ENCODE measurements at regions of chr11 and their contacts with region 1.

Region 1: DNA sequence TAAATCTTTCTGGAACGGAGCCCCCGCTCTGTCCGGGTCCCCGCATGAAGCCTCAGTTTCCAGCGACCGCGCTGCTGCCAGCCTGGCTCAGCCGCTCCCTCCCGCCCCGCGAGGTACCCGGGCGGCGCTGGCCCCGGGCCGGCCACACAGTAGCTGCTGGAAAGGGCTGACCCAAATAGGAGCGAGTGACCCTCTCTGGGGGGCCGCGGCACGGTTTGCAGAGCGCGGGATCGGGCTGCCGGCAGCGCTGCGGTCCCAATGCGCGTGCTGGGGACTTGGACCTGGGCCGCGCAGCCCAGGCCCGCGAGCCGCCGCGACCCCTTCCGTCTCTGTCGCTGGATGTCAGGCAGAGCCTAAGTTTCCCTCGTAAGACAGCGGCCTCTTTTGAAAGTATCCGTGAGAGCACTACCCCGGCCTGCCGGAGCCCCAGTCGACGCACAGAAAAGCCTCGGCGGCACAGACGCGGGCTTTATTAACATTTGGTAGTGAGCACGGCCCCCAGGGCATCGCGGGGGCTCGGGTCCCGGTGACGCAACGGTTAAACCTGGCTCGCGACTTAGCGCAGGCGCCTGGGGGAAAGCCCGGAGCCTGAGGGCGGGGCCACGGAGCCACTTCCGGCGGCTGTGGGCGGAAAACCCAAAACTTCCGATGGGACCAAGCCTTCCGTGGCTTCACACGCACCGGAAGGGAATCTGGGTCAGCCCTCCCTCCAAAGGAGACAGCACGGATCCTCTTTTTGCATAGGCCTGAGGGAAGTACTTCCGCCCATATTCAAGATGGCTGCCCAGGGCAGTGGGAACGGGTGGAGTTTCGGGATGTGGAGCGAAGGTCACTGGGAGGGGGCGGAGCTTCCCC is 14.9 kb downstream of the BAD start:
- DNase-seq: peak; percentile 87 to 100
- ATAC-seq: peak; percentile 80 to 91
- H3K4me3 ChIP-seq: peak overlapping the region; percentile 72
- H3K27ac ChIP-seq: peak overlapping the region; percentile 94 to 97
- H3K4me1 ChIP-seq: peaks cover 32% of the 10 kb centered on the region
- CTCF ChIP-seq: peak; percentile 12; the same call in 1 of the 3 replicates
- EP300 ChIP-seq: no peak
- POLR2A ChIP-seq: peak; percentile 32
- RAD21 ChIP-seq: no peak

Region 2: GRCh38 chr11:64240394-64241174 is 29.0 kb before region 1 on chr11 and contains the start of gene FKBP2:
- CTCF ChIA-PET with region 1: interaction called, 220 read pairs
- POLR2A ChIA-PET with region 1: interaction called, 53 read pairs
- DNase-seq: peak; percentile 94 to 98
- ATAC-seq: peak; percentile 41 to 64
- H3K4me3 ChIP-seq: peak within 1 kb of the TSS; percentile 73
- H3K27ac ChIP-seq: peak within 1 kb of the TSS; percentile 91 to 98
- H3K4me1 ChIP-seq: peaks cover 44% of the 10 kb centered on the region
- CTCF ChIP-seq: no peak
- EP300 ChIP-seq: no peak
- POLR2A ChIP-seq: peak; percentile 66
- RAD21 ChIP-seq: no peak
- polyA plus RNA-seq, gene FKBP2: 40.5 and 41.4 TPM in 2 replicates

Region 3: GRCh38 chr11:64284048-64284961 is 14.7 kb after region 1 on chr11 and contains the start of gene BAD:
- CTCF ChIA-PET with region 1: interaction called, 42 read pairs
- POLR2A ChIA-PET with region 1: interaction called, 49 read pairs
- DNase-seq: peak; percentile 93 to 97
- ATAC-seq: peak; percentile 82 to 93
- H3K4me3 ChIP-seq: peak within 1 kb of the TSS; percentile 63
- H3K27ac ChIP-seq: peak within 1 kb of the TSS; percentile 93 to 98
- H3K4me1 ChIP-seq: peaks cover 17% of the 10 kb centered on the region; the same call in 1 of the 3 replicates
- CTCF ChIP-seq: no peak
- EP300 ChIP-seq: no peak
- POLR2A ChIP-seq: peak; percentile 27
- RAD21 ChIP-seq: no peak
- polyA plus RNA-seq, gene BAD: 33.7 and 35.6 TPM in 2 replicates

Region 4: GRCh38 chr11:64291262-64291751 is 21.7 kb after region 1 on chr11 and contains the start of gene KCNK4:
- CTCF ChIA-PET with region 1: interaction called, 27 read pairs
- POLR2A ChIA-PET with region 1: interaction called, 49 read pairs
- DNase-seq: no peak
- ATAC-seq: no peak
- H3K4me3 ChIP-seq: no peak within 1 kb of the TSS
- H3K27ac ChIP-seq: 0 out of 6 replicates have a peak within 1 kb of the TSS, but pooled peaks of 1 of the 2 experiments have one; percentile 30
- H3K4me1 ChIP-seq: peaks cover 8% of the 10 kb centered on the region; the same call in 2 of the 3 replicates
- CTCF ChIP-seq: no peak
- EP300 ChIP-seq: no peak
- POLR2A ChIP-seq: no peak
- RAD21 ChIP-seq: no peak
- polyA plus RNA-seq, gene KCNK4: not detected in 2 replicates

Measured in A549 (cell line).